Heart left ventricle (tissue), 16 donors: ENCODE measurements at regions of chr3 and their contacts with region 1.

Region 1: DNA sequence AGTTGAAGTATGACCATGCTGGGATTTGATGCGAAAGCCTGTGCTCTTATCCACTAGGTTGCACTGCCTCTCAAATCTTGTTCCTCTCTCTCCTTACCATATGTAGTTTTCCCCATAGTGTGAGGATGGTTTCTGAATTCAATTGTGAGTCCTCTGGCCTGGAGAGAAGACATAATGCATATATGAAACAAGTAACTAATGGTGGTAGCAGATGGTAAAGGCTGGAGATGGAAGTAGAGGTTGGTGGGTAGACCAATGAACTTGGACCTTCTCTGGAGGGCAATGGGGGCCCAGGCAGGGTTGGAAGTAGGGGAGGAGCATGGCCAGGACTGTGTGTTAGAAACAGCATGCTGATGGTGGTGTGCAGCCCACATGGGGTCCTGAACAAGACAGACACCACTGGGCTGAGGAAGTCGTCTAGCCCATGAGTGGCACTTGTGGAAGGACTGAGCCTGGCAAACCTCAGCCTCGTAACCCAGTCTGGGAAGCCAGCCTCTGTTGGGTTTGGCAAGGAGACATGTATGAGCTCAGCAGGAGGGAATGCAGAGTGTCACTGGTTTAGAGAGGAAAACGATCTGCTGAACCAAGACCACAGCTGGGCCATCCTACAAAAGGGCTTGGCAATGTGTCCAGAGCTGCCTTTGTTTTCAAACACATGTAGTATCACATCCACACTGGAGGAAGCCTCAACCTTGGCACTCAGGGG is 18.5 kb upstream of the LMCD1 start:
- DNase-seq: peak; percentile 72 to 86 (median 76)
- ATAC-seq: peak; percentile 87 to 94 (median 93)
- H3K4me3 ChIP-seq: no peak overlapping the region
- H3K27ac ChIP-seq: peak overlapping the region; percentile 7 to 75 (median 52)
- H3K4me1 ChIP-seq: peaks cover 0 to 50% (median 27%) of the 10 kb centered on the region in 12 donors
- H3K27me3 ChIP-seq: no peaks in the 10 kb centered on the region
- CTCF ChIP-seq: no peak
- POLR2A ChIP-seq: no peak

Region 2: GRCh38 chr3:8380904-8381704 is 102.0 kb before region 1 on chr3:
- intact Hi-C with region 1: no loop called
- DNase-seq: no peak
- ATAC-seq: no peak
- H3K4me3 ChIP-seq: no peak overlapping the region
- H3K27ac ChIP-seq: no peak overlapping the region
- H3K4me1 ChIP-seq: no peaks in the 10 kb centered on the region
- H3K27me3 ChIP-seq: no peaks in the 10 kb centered on the region
- CTCF ChIP-seq: no peak
- POLR2A ChIP-seq: no peak

Region 3: DNA sequence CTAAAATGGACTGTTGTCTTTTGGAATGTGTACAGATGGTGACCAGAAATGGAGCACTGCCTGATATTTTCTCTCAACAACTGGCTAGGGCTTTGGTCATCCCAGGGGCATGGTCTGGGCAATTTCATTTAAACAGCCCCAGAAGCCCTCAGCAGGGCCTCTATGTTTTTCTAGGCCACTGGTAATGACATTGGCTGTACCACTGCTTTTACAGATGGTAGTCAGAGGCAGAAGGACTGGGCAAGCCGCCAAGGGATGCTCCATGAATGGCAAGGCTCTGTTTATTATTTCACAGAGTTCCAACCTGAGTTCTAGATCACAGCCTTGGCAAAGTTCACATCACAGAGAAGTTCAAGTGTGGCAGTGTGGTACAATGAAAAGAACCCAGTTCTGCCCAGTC is 18.4 kb before region 1 on chr3:
- intact Hi-C with region 1: no loop called
- DNase-seq: peak in 1 of 5 donors; percentile 35
- ATAC-seq: no peak
- H3K4me3 ChIP-seq: no peak overlapping the region
- H3K27ac ChIP-seq: no peak overlapping the region
- H3K4me1 ChIP-seq: peaks cover 0 to 14% (median 0%) of the 10 kb centered on the region in 12 donors
- H3K27me3 ChIP-seq: no peaks in the 10 kb centered on the region
- CTCF ChIP-seq: no peak
- POLR2A ChIP-seq: no peak

Region 4: GRCh38 chr3:8536096-8537056 is 53.3 kb after region 1 on chr3:
- intact Hi-C with region 1: loop called in 1 of 10 experiments (anchors 5 kb)
- DNase-seq: no peak
- ATAC-seq: peak in 1 of 4 donors; percentile 40
- H3K4me3 ChIP-seq: no peak overlapping the region
- H3K27ac ChIP-seq: peak overlapping the region in 6 of 12 donors; percentile 10 to 36 (median 26)
- H3K4me1 ChIP-seq: peaks cover 0 to 65% (median 38%) of the 10 kb centered on the region in 12 donors
- H3K27me3 ChIP-seq: no peaks in the 10 kb centered on the region
- CTCF ChIP-seq: no peak
- POLR2A ChIP-seq: no peak

Region 5: DNA sequence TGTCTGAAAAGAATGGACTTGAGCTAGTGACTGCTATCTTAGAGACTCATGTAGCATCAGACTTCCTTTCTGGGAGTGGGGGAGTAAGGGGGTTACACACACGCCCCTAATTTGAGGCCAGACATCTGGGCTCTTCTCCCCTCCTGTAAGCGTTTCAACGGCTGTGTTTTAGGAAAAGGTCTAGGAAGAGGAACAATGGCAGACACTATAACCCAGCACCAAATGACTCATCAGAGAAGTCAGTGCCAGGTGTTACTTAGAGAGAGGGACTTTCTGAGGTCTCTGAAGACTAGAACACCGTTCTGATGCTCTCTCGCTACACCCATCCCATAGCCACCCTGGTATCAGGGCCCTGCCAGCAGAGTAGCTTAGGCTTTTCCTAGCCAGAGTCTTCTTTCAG is 96.0 kb after region 1 on chr3:
- intact Hi-C with region 1: no loop called
- DNase-seq: no peak
- ATAC-seq: peak in 2 of 4 donors; percentile 56 to 78
- H3K4me3 ChIP-seq: no peak overlapping the region
- H3K27ac ChIP-seq: peak overlapping the region in 4 of 12 donors; percentile 17 to 47 (median 38)
- H3K4me1 ChIP-seq: peaks cover 0 to 32% (median 12%) of the 10 kb centered on the region in 12 donors
- H3K27me3 ChIP-seq: no peaks in the 10 kb centered on the region
- CTCF ChIP-seq: no peak
- POLR2A ChIP-seq: no peak

Region 6: GRCh38 chr3:8622873-8623691 is 140.0 kb after region 1 on chr3:
- intact Hi-C with region 1: loop called in 2 of 10 experiments (anchors 5 kb)
- DNase-seq: peak; percentile 63 to 79 (median 71)
- ATAC-seq: peak; percentile 65 to 92 (median 84)
- H3K4me3 ChIP-seq: peak overlapping the region in 2 of 12 donors; percentile 10 to 19
- H3K27ac ChIP-seq: peak overlapping the region in 1 of 12 donors; percentile 30
- H3K4me1 ChIP-seq: peaks cover 0 to 25% (median 12%) of the 10 kb centered on the region in 12 donors
- H3K27me3 ChIP-seq: no peaks in the 10 kb centered on the region
- CTCF ChIP-seq: peak; percentile 78 to 95 (median 88)
- POLR2A ChIP-seq: no peak